ENCODE measurements at regions of chr17 and their contacts with region 1.

Region 1: GRCh38 chr17:76983075-76983775 is 115.0 kb downstream of the MGAT5B start:
- DNase-seq: peak; percentile 22
- ATAC-seq: no peak
- H3K4me3 Mint-ChIP-seq: no peak overlapping the region
- H3K27ac Mint-ChIP-seq: no peak overlapping the region
- H3K4me1 Mint-ChIP-seq: peaks cover 20% of the 10 kb centered on the region
- H3K27me3 Mint-ChIP-seq: no peaks in the 10 kb centered on the region

Region 2: DNA sequence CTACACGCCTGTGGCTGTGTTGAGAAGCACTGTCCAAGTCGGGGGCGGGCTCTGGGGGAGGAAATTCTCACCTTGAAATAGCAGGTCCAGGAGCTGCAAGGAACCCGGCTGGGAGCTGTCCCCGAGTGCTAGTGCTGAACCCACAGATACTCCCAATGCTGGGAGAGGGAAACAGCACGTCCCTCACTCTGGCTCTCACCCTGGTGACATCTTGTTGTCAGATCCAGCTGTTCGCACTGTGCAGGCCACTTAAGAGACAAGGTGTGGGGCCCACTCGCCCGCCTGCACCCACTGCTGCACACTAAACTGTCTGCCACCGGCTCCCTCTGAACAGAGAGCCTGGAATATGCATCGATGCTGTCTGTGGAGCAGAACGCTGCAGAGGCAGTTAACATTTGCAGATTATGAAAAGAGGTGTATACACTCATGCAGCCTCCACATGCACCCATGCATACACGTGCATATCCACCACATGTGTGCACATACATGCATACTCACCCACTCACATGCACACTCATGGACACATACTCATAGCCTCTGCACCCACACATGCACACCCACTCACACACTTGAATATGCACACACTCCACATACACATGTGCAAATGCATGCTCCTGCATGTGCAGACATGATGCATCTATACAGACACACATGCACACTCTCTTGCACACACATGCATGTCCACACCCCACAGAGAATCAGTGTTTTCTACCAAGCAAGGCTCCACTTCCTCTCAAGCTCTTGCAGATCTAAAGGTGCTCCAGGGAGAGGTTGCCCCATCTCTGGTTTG is 73.1 kb before region 1 on chr17:
- CTCF ChIA-PET with region 1: no interaction called
- POLR2A ChIA-PET with region 1: no interaction called
- intact Hi-C with region 1: loop called in 1 of 2 experiments (anchors 10 kb)
- DNase-seq: peak; percentile 68
- ATAC-seq: peak; percentile 42
- H3K4me3 Mint-ChIP-seq: no peak overlapping the region
- H3K27ac Mint-ChIP-seq: no peak overlapping the region
- H3K4me1 Mint-ChIP-seq: no peaks in the 10 kb centered on the region
- H3K27me3 Mint-ChIP-seq: no peaks in the 10 kb centered on the region